ENCODE measurements at regions of chr12 and their contacts with region 1.

Region 1: GRCh38 chr12:11738450-11738849 is 89.0 kb downstream of the ETV6 start:
- DNase-seq: no peak
- ATAC-seq: no peak
- H3K4me3 ChIP-seq: no peak overlapping the region
- H3K4me3 Mint-ChIP-seq: no peak overlapping the region
- H3K27ac ChIP-seq: no peak overlapping the region
- H3K27ac Mint-ChIP-seq: no peak overlapping the region
- H3K4me1 ChIP-seq: peaks cover 0 to 4% of the 10 kb centered on the region in 2 experiments
- H3K4me1 Mint-ChIP-seq: peaks cover 56 to 70% (median 66%) of the 10 kb centered on the region in 3 donors
- H3K27me3 ChIP-seq: no peaks in the 10 kb centered on the region
- H3K27me3 Mint-ChIP-seq: no peaks in the 10 kb centered on the region

Region 2: GRCh38 chr12:11727133-11727664 is 11.3 kb before region 1 on chr12:
- CTCF ChIA-PET with region 1: interaction called in 1 of 2 experiments, 5 read pairs
- POLR2A ChIA-PET with region 1: interaction called in 1 of 2 experiments, 13 read pairs
- DNase-seq: peak; percentile 10 to 66 (median 39)
- ATAC-seq: peak; percentile 47 to 90 (median 66)
- H3K4me3 ChIP-seq: no peak overlapping the region
- H3K4me3 Mint-ChIP-seq: peak overlapping the region; percentile 0 to 57 (median 1)
- H3K27ac ChIP-seq: peak overlapping the region; percentile 16
- H3K27ac Mint-ChIP-seq: peak overlapping the region; percentile 68 to 71
- H3K4me1 ChIP-seq: peaks cover 31 to 47% of the 10 kb centered on the region in 2 experiments
- H3K4me1 Mint-ChIP-seq: peaks cover 61 to 81% (median 75%) of the 10 kb centered on the region in 3 donors
- H3K27me3 ChIP-seq: no peaks in the 10 kb centered on the region
- H3K27me3 Mint-ChIP-seq: no peaks in the 10 kb centered on the region

Measured in T-cell (primary cell).